ENCODE measurements at regions of chr12 and their contacts with region 1.

Region 1: GRCh38 chr12:107670999-107671643 is 14.5 kb upstream of the PWP1 start:
- DNase-seq: peak; percentile 59

Region 2: GRCh38 chr12:107580750-107581618 is 90.1 kb before region 1 on chr12:
- in situ Hi-C with region 1: no loop called
- DNase-seq: no peak

Region 3: GRCh38 chr12:107748472-107748871 is 77.4 kb after region 1 on chr12:
- in situ Hi-C with region 1: loop called (anchors 10 kb)
- DNase-seq: no peak

Measured in SK-MEL-5 (cell line).